Activated CD4-positive, alpha-beta T cell treated with anti-CD3 and anti-CD28 coated beads, Interleukin-2, amount 10 ng/mL, durations not matched to agents 24 days and 14 days (primary cell): ENCODE measurements at regions of chr13 and their contacts with region 1.

Region 1: DNA sequence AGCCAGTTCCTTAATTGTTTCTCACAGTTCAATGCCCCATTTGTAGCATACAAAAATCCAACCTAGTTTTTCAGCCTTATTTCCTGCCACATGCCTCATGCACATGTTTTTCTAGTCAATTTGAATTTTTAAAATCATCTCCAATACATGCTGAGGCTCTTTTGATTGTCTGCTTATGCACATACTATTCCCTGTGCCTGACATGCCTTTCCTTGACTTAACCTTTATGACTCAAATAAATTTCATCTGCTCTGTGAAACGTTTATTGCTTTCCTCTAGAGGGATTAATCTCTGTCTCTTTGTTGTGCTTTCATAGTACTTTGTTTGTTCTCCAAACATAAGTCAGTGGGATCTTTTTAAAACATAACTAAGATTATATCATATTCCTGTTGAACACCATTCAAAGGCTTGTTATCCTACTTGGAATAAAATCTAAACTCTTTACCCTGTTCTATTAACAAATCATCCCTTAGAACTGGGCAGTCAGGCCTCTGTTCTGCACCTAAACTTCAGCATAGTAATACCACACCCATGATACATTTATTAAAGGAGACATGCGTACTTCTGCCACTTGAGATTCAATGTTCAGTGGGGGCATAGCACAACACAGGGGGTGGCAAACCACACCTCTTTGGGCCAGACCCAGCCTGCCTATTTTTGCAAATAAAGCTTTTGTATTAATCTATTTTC is 346.6 kb downstream of the FGF14 start:
- DNase-seq: no peak
- H3K4me3 Mint-ChIP-seq: no peak overlapping the region
- H3K27ac Mint-ChIP-seq: no peak overlapping the region
- H3K4me1 Mint-ChIP-seq: no peaks in the 10 kb centered on the region
- H3K27me3 Mint-ChIP-seq: no peaks in the 10 kb centered on the region

Region 2: GRCh38 chr13:101893021-101893420 is 162.2 kb before region 1 on chr13:
- intact Hi-C with region 1: no loop called
- DNase-seq: no peak
- H3K4me3 Mint-ChIP-seq: no peak overlapping the region
- H3K27ac Mint-ChIP-seq: no peak overlapping the region
- H3K4me1 Mint-ChIP-seq: no peaks in the 10 kb centered on the region
- H3K27me3 Mint-ChIP-seq: no peaks in the 10 kb centered on the region

Region 3: GRCh38 chr13:102020611-102021216 is 34.5 kb before region 1 on chr13:
- intact Hi-C with region 1: loop called (anchors 2 kb)
- DNase-seq: no peak
- H3K4me3 Mint-ChIP-seq: no peak overlapping the region
- H3K27ac Mint-ChIP-seq: no peak overlapping the region
- H3K4me1 Mint-ChIP-seq: no peaks in the 10 kb centered on the region
- H3K27me3 Mint-ChIP-seq: no peaks in the 10 kb centered on the region

Region 4: GRCh38 chr13:102291587-102292218 is 236.5 kb after region 1 on chr13:
- intact Hi-C with region 1: no loop called
- DNase-seq: no peak
- H3K4me3 Mint-ChIP-seq: no peak overlapping the region
- H3K27ac Mint-ChIP-seq: no peak overlapping the region
- H3K4me1 Mint-ChIP-seq: no peaks in the 10 kb centered on the region
- H3K27me3 Mint-ChIP-seq: no peaks in the 10 kb centered on the region

Region 5: DNA sequence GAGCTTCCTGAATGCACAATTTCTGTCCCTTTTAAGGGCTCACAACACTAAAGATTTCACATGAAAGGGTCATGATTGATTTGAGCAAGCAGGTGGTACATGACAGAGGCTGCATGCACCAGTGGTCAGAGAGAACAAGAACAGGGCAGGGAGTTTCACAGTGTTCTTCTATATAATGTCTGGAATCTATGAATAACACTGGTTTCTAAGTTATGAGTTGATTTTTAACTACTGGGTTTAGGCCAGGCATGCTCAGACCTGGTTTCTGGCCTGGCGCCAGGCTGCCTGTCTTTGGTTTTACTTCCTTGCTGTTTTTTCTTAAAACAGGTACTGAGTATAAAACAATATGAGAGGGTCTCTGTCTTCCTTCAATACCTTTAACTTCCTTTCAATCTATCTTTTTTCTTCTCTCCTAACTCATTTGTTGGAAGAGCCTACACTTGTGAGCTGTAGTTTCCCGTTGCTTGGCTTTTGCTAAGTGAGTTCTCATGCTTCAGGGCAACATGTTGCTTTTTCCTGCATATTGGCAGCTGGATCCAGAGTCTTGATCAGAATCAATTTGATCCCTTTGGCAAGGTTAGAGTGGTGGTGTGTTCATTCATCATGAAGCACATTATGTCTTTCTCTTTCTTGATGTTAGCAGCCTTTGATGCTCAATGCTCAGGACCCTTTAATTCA is 385.2 kb after region 1 on chr13:
- intact Hi-C with region 1: no loop called
- DNase-seq: no peak
- H3K4me3 Mint-ChIP-seq: no peak overlapping the region
- H3K27ac Mint-ChIP-seq: no peak overlapping the region
- H3K4me1 Mint-ChIP-seq: no peaks in the 10 kb centered on the region
- H3K27me3 Mint-ChIP-seq: peaks cover 2% of the 10 kb centered on the region